IMR-90 (cell line): ENCODE measurements at regions of chr10 and their contacts with region 1.

Region 1: DNA sequence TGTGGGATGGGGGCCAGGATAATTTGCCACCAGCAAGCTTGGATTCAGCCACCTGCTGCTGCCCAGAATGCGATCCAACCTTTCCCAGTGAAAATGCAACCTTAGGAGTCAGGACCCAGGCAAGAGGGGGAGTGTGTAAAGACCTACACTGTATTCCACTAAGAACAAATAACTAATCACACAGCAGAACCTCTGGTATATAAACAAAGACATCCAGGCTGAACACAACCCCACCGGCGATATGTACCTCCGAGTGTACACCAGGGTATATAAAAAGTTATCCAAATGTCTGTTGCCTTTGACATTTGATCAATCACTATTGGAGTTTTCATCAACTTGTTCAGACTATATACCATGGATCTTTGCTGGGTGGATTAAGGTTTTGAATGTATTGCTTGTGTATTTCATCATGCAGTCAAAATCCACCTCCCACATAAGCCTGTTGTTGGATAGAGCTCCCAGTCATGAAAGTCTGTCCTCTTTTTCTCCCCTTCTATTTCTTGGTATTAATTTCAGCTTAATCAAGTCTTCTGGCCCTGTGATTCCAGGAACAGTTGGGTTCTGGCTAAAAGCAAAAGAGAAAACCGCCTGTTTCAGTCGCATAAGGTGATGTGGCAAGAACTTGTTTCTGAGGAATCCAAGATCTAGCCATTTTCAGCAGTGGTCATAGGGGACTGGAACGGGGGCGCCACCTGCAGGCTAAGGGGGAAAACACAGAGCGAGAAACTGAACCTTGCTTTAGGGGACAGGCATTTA is 290.7 kb downstream of the CCDC3 start:
- DNase-seq: peak; percentile 87
- ATAC-seq: peak; percentile 52
- H3K4me3 ChIP-seq: no peak overlapping the region
- H3K27ac ChIP-seq: peak overlapping the region; percentile 85; the same call in 1 of the 2 replicates
- H3K4me1 ChIP-seq: peaks cover 28% of the 10 kb centered on the region
- H3K27me3 ChIP-seq: no peaks in the 10 kb centered on the region
- CTCF ChIP-seq: peak; percentile 96
- POLR2A ChIP-seq: no peak; the same call in 1 of the 2 replicates
- RAD21 ChIP-seq: peak; percentile 91

Region 2: GRCh38 chr10:12214763-12215218 is 496.0 kb before region 1 on chr10:
- CTCF ChIA-PET with region 1: interaction called, 7 read pairs
- POLR2A ChIA-PET with region 1: no interaction called
- dilution Hi-C with region 1: no loop called
- in situ Hi-C with region 1: no loop called
- intact Hi-C with region 1: loop called (anchors 1 kb)
- DNase-seq: peak; percentile 64
- ATAC-seq: peak; percentile 73
- H3K4me3 ChIP-seq: no peak overlapping the region
- H3K27ac ChIP-seq: peak overlapping the region; percentile 29; the same call in 1 of the 2 replicates
- H3K4me1 ChIP-seq: peaks cover 5% of the 10 kb centered on the region
- H3K27me3 ChIP-seq: no peaks in the 10 kb centered on the region
- CTCF ChIP-seq: peak; percentile 73
- POLR2A ChIP-seq: no peak
- RAD21 ChIP-seq: peak; percentile 66

Region 3: GRCh38 chr10:12348870-12349628 is 361.7 kb before region 1 on chr10 and contains the start of gene CAMK1D:
- CTCF ChIA-PET with region 1: interaction called, 5 read pairs
- POLR2A ChIA-PET with region 1: no interaction called
- dilution Hi-C with region 1: no loop called
- in situ Hi-C with region 1: no loop called
- intact Hi-C with region 1: loop called (anchors 2 kb)
- DNase-seq: peak; percentile 66
- ATAC-seq: peak; percentile 85
- H3K4me3 ChIP-seq: peak within 1 kb of the TSS; percentile 84
- H3K27ac ChIP-seq: peak within 1 kb of the TSS; percentile 37; the same call in 1 of the 2 replicates
- H3K4me1 ChIP-seq: no peaks in the 10 kb centered on the region
- H3K27me3 ChIP-seq: peaks cover 4% of the 10 kb centered on the region; the same call in 1 of the 2 replicates
- CTCF ChIP-seq: peak; percentile 43
- POLR2A ChIP-seq: peak; percentile 60; the same call in 1 of the 2 replicates
- RAD21 ChIP-seq: no peak; the same call in 1 of the 2 replicates
- total RNA-seq, gene CAMK1D: 4.2 and 5.0 TPM in 2 replicates

Region 4: GRCh38 chr10:13056456-13057077 is 345.8 kb after region 1 on chr10:
- CTCF ChIA-PET with region 1: no interaction called
- POLR2A ChIA-PET with region 1: no interaction called
- dilution Hi-C with region 1: no loop called
- in situ Hi-C with region 1: loop called (anchors 25 kb)
- intact Hi-C with region 1: loop called (anchors 2 kb)
- DNase-seq: peak; percentile 16
- ATAC-seq: peak; percentile 85
- H3K4me3 ChIP-seq: no peak overlapping the region
- H3K27ac ChIP-seq: no peak overlapping the region
- H3K4me1 ChIP-seq: no peaks in the 10 kb centered on the region
- H3K27me3 ChIP-seq: peaks cover 13% of the 10 kb centered on the region; the same call in 1 of the 2 replicates
- CTCF ChIP-seq: peak; percentile 49
- POLR2A ChIP-seq: no peak
- RAD21 ChIP-seq: peak; percentile 51

Region 5: DNA sequence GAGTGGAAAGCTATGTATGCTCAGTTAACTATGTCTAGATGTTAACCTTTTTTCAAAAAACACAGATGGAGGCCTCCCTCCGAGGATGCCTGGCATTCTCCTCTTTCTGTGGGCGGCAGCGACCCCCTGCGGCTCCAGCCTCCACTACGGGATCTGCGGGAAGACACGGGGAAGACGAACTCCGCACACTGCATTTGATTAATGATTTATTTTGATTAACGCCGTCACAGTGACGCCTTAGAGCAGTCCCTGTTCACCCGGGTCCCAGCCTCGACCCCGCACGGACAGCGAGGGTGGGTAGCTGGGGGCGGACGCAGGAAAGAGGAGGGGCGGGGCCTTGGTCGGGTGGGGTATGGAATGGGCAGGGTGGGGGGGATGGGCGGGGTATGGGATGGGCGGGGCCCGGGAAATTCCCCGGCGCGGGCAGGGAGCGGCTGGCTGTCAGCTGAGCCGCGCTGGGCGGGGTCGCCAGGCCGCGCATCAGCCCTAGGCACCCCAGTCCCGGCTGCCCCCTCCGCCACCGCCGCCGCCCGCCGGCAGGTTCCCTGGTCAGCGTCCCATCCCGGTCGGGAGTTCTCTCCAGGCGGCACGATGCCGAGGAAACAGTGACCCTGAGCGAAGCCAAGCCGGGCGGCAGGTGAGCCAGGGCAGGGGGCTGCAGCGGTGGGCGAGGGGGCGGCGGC is 389.0 kb after region 1 on chr10 and contains the start of gene OPTN:
- CTCF ChIA-PET with region 1: interaction called, 4 read pairs
- POLR2A ChIA-PET with region 1: no interaction called
- dilution Hi-C with region 1: no loop called
- in situ Hi-C with region 1: no loop called
- intact Hi-C with region 1: loop called (anchors 1 kb)
- DNase-seq: peak; percentile 83
- ATAC-seq: peak; percentile 88
- H3K4me3 ChIP-seq: peak within 1 kb of the TSS; percentile 73
- H3K27ac ChIP-seq: peak within 1 kb of the TSS; percentile 93
- H3K4me1 ChIP-seq: peaks cover 9% of the 10 kb centered on the region
- H3K27me3 ChIP-seq: no peaks in the 10 kb centered on the region
- CTCF ChIP-seq: peak; percentile 96
- POLR2A ChIP-seq: peak; percentile 69; the same call in 1 of the 2 replicates
- RAD21 ChIP-seq: peak; percentile 89
- total RNA-seq, gene OPTN: 34.8 and 56.9 TPM in 2 replicates